Caco-2 (cell line): ENCODE measurements at regions of chr7 and their contacts with region 1.

Region 1: DNA sequence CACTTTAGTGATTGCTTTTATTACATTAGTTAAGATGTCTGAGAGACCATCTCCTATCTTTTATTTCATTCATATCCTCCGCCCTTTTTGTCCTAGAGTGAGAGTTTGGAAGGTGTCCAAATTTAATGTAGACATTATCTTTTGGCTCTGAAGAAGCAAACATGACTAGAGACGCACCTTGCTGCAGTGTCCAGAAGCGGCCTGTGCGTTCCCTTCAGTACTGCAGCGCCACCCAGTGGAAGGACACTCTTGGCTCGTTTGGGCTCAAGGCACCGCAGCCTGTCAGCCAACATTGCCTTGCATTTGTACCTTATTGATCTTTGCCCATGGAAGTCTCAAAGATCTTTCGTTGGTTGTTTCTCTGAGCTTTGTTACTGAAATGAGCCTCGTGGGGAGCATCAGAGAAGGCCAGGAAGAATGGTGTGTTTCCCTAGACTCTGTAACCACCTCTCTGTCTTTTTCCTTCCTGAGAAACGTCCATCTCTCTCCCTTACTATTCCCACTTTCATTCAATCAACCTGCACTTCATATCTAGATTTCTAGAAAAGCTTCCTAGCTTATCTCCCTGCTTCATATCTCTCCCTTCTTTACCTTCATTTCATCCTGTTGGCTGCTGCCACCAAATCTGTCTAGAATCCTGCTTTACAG is 10.4 kb upstream of the CLCN1 start:
- DNase-seq: peak; percentile 71 to 83
- H3K4me3 ChIP-seq: no peak overlapping the region
- H3K4me3 Mint-ChIP-seq: no peak overlapping the region
- H3K27ac Mint-ChIP-seq: no peak overlapping the region
- H3K4me1 ChIP-seq: 0 out of 2 replicates have a peak, but pooled peaks cover 6% of the 10 kb centered on the region
- H3K4me1 Mint-ChIP-seq: peaks cover 3% of the 10 kb centered on the region
- H3K27me3 ChIP-seq: no peaks in the 10 kb centered on the region
- H3K27me3 Mint-ChIP-seq: no peaks in the 10 kb centered on the region
- CTCF ChIP-seq: peak; percentile 74 to 81

Region 2: DNA sequence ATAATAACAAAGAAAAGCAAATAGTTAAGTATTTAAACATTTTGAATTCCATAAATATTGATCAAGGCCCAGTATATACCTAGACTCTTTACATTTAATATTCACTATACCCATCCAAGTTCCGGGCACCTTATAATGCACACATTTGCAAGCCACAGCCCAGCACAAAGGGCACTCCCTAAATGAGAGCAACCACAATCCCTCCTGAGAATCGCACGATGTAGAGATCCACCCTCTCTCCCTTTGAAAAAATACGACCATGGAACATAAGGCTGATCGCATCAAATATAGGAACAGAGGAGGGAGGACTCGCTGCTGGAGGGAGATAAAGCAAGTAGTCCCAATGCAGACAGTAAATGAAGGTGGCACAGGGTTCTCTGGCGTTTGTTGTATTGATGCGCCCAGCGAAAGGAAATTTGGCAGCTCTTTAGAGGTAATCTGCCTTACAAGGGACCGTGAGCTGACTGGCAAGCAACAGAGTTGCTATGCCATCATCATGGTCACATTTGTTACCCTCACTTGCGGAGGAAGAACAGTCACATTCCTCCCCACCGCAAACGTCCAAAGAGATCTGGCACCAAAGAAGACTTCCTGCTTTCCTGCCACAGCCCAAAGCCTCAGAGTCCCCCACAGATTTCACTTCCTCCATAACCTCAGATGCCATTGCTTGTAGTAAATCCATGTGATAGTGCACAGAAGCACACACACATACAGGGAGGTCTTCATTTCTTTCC is 99.8 kb before region 1 on chr7:
- CTCF ChIA-PET with region 1: no interaction called
- POLR2A ChIA-PET with region 1: no interaction called
- intact Hi-C with region 1: no loop called
- DNase-seq: no peak
- H3K4me3 ChIP-seq: no peak overlapping the region
- H3K4me3 Mint-ChIP-seq: no peak overlapping the region
- H3K27ac Mint-ChIP-seq: no peak overlapping the region
- H3K4me1 ChIP-seq: no peaks in the 10 kb centered on the region
- H3K4me1 Mint-ChIP-seq: peaks cover 6% of the 10 kb centered on the region
- H3K27me3 ChIP-seq: no peaks in the 10 kb centered on the region
- H3K27me3 Mint-ChIP-seq: peaks cover 18% of the 10 kb centered on the region
- CTCF ChIP-seq: no peak

Region 3: DNA sequence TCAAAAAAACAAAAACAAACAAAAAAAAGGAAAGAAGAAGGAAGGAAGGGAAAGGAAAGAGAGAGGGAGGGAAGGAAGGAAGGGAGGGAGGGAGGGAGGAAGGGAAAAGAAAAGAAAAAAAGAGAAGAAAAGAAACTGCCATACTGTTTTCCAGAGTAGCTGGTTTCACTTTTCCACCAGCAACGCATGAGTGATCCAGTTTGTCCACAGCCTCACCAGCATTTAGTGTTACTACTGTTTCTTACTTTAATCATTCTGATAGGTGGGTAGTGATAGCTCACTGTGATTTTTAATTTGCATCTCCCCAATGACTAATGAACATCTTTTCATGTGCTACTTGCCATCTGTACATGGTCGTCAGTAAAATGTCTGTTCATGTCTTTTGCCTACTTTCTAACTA is 32.7 kb before region 1 on chr7:
- CTCF ChIA-PET with region 1: no interaction called
- POLR2A ChIA-PET with region 1: interaction called, 11 read pairs
- intact Hi-C with region 1: no loop called
- DNase-seq: no peak
- H3K4me3 ChIP-seq: no peak overlapping the region
- H3K4me3 Mint-ChIP-seq: no peak overlapping the region
- H3K27ac Mint-ChIP-seq: no peak overlapping the region
- H3K4me1 ChIP-seq: no peaks in the 10 kb centered on the region
- H3K4me1 Mint-ChIP-seq: no peaks in the 10 kb centered on the region
- H3K27me3 ChIP-seq: no peaks in the 10 kb centered on the region
- H3K27me3 Mint-ChIP-seq: no peaks in the 10 kb centered on the region
- CTCF ChIP-seq: no peak

Region 4: DNA sequence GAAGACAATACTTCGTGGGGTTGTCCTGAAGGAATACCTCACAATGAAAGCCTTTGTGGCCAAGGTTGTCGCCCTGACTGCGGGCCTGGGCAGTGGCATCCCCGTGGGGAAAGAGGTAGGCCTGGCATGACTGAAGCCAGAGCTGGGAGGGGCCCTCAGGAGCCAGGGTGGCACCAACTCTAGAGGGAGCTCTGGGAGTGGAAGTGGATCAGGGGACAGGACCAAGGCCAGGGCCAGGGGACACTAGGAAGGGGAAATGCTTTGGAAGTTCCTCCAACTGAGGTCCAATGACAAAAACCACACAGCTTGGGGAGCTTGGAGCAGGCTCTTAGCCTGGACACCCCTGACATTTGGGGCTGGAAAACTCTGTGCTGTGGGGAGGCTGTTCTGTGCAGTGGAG is 16.2 kb after region 1 on chr7:
- CTCF ChIA-PET with region 1: interaction called, 11 read pairs
- POLR2A ChIA-PET with region 1: no interaction called
- intact Hi-C with region 1: no loop called
- DNase-seq: peak in 1 of 2 experiments; percentile 13
- H3K4me3 ChIP-seq: no peak overlapping the region
- H3K4me3 Mint-ChIP-seq: no peak overlapping the region
- H3K27ac Mint-ChIP-seq: no peak overlapping the region
- H3K4me1 ChIP-seq: peaks cover 8% of the 10 kb centered on the region
- H3K4me1 Mint-ChIP-seq: peaks cover 13% of the 10 kb centered on the region
- H3K27me3 ChIP-seq: no peaks in the 10 kb centered on the region
- H3K27me3 Mint-ChIP-seq: no peaks in the 10 kb centered on the region
- CTCF ChIP-seq: no peak

Region 5: DNA sequence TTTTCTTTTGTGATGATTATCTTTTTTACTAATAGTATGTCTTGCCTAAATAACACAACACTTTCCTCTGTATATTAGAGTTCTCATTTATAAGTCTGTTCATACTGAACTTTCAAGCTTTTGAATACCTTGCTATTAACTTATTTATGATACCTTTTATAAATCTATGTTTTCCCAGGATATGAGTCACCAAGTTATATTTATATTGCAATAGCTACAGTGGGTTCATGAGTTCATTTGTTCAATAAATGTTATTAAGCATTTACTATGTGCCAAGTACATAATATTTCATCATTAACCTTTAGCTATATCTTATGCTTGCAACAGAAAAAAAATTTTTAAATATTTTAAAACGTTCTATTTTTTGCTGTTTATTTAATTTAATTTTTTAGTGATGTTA is 28.7 kb after region 1 on chr7:
- CTCF ChIA-PET with region 1: no interaction called
- POLR2A ChIA-PET with region 1: no interaction called
- intact Hi-C with region 1: no loop called
- DNase-seq: no peak
- H3K4me3 ChIP-seq: no peak overlapping the region
- H3K4me3 Mint-ChIP-seq: no peak overlapping the region
- H3K27ac Mint-ChIP-seq: no peak overlapping the region
- H3K4me1 ChIP-seq: no peaks in the 10 kb centered on the region
- H3K4me1 Mint-ChIP-seq: no peaks in the 10 kb centered on the region
- H3K27me3 ChIP-seq: no peaks in the 10 kb centered on the region
- H3K27me3 Mint-ChIP-seq: no peaks in the 10 kb centered on the region
- CTCF ChIP-seq: no peak

Region 6: DNA sequence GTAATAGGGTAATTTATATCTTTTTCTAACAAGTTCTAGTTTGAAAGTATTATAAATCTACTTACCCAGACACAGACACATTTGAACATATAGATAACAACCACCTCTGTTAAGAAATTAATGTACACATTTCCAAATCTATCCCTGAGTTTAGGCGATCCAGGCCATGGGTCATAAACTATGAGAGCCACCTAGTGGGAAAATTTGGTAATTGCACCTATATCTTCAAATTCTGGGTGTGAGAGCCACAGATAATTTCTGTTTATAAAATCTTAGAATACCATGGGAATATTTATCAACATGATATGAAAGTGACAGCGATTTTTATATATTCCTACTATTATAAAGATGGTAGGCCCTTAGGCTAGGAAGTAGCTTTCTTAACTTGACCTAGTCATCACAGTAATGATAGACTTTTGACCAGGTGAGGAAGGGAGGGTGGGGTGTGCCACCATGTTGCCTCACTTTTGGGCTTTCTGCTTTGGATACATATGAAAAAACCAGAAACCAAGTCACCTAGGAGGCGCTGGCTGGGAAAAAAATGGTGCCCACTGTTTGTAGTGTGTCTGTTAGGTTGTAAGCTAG is 111.1 kb after region 1 on chr7:
- CTCF ChIA-PET with region 1: no interaction called
- POLR2A ChIA-PET with region 1: no interaction called
- intact Hi-C with region 1: loop called (anchors 2 kb)
- DNase-seq: peak in 1 of 2 experiments; percentile 66
- H3K4me3 ChIP-seq: no peak overlapping the region
- H3K4me3 Mint-ChIP-seq: no peak overlapping the region
- H3K27ac Mint-ChIP-seq: no peak overlapping the region
- H3K4me1 ChIP-seq: peaks cover 17% of the 10 kb centered on the region
- H3K4me1 Mint-ChIP-seq: peaks cover 35% of the 10 kb centered on the region
- H3K27me3 ChIP-seq: no peaks in the 10 kb centered on the region
- H3K27me3 Mint-ChIP-seq: no peaks in the 10 kb centered on the region
- CTCF ChIP-seq: peak; percentile 70 to 75

Region 7: GRCh38 chr7:143490717-143491306 is 185.3 kb after region 1 on chr7:
- CTCF ChIA-PET with region 1: no interaction called
- POLR2A ChIA-PET with region 1: no interaction called
- intact Hi-C with region 1: no loop called
- DNase-seq: peak; percentile 68 to 69
- H3K4me3 ChIP-seq: no peak overlapping the region
- H3K4me3 Mint-ChIP-seq: no peak overlapping the region
- H3K27ac Mint-ChIP-seq: no peak overlapping the region
- H3K4me1 ChIP-seq: peaks cover 17% of the 10 kb centered on the region
- H3K4me1 Mint-ChIP-seq: peaks cover 18% of the 10 kb centered on the region
- H3K27me3 ChIP-seq: no peaks in the 10 kb centered on the region
- H3K27me3 Mint-ChIP-seq: no peaks in the 10 kb centered on the region
- CTCF ChIP-seq: peak; percentile 77 to 91